PC-9 (cell line): ENCODE measurements at regions of chr1 and their contacts with region 1.

Region 1: DNA sequence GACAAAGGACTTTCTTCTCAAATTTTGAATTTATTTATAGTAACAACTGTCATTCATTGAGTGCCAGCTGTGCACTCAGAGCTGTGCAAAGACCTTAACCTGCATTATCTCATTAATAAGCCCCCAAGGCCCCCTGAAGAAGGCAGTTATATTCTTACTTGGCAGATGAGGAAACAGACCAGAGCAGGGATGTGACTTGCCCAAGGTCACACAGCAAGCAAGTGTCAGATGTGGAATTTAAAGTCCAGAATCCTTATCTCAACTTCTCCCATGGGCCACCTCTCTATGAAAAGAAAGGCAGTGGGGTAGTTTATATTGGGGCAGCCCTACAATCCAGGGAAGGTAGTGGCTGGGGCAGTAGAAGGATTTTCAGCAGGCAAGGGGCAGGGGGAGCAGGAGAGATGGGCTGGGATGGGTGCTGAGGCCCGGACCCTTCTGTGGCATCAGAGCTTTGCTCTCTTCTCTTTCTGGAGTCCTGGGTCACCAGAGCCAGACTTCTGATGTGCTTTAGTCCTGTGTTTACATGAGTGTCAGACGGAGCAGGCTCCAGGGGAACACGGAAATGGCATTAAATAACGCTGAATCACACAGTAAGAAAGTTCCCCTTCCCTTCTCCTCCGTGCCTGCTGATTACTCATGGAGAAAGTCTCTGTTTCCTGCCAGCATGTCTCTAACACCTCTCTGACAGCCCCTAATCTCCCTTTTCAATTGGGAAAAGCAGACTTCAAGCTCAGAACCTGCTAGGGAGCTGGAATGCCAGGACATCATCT is 39.5 kb downstream of the EPHB2 start:
- DNase-seq: peak; percentile 50 to 88
- H3K4me3 ChIP-seq: no peak overlapping the region
- H3K27ac ChIP-seq: peak overlapping the region; percentile 89
- H3K4me1 ChIP-seq: peaks cover 63% of the 10 kb centered on the region
- H3K27me3 ChIP-seq: no peaks in the 10 kb centered on the region
- CTCF ChIP-seq: no peak

Region 2: GRCh38 chr1:21012937-21013336 is 1737.2 kb before region 1 on chr1:
- CTCF ChIA-PET with region 1: no interaction called
- POLR2A ChIA-PET with region 1: no interaction called
- intact Hi-C with region 1: no loop called
- DNase-seq: no peak
- H3K4me3 ChIP-seq: no peak overlapping the region
- H3K27ac ChIP-seq: no peak overlapping the region
- H3K4me1 ChIP-seq: no peaks in the 10 kb centered on the region
- H3K27me3 ChIP-seq: no peaks in the 10 kb centered on the region
- CTCF ChIP-seq: no peak

Region 3: GRCh38 chr1:22709891-22710700 is 40.0 kb before region 1 on chr1:
- CTCF ChIA-PET with region 1: no interaction called
- POLR2A ChIA-PET with region 1: no interaction called
- intact Hi-C with region 1: loop called (anchors 5 kb)
- DNase-seq: peak in 1 of 2 experiments; percentile 64
- H3K4me3 ChIP-seq: peak overlapping the region; percentile 57; the same call in 1 of the 2 replicates
- H3K27ac ChIP-seq: no peak overlapping the region
- H3K4me1 ChIP-seq: 0 out of 2 replicates have a peak, but pooled peaks cover 5% of the 10 kb centered on the region
- H3K27me3 ChIP-seq: no peaks in the 10 kb centered on the region
- CTCF ChIP-seq: no peak

Region 4: DNA sequence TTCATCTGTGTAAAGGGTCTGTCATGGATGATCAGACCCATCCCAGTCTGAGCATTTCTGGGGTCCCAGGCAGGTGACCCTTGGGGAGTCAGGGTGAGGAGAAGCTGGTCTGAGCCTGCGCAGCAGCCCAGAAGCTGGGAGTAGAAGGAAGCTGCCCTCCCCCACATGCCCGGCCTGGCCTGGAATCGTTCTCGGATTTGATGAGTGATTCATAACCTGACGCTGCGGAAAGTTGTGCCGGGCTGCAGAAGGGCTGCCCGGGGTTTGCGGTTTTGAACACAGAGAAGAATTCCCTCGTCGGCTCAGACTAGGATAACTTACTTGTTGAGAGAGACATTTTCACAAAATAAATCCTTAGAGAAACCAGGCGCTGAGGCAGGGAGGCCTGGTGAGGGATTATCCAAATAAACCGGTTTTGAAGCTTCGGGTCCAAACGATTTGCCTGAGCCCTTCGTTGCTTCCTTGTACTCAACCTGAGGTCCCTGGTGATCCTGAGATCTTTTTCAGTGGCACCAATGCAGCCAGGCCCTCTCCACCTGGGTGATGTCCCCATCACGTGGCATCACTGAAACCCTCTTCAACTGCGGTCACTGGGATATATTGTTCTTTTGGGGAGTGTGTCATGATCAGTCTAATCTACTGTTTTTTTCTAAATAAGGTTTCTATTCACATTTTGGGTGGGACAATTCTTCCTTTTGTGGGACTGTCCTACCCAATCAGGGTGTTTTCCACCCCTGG is 10.3 kb before region 1 on chr1:
- CTCF ChIA-PET with region 1: no interaction called
- POLR2A ChIA-PET with region 1: interaction called, 10 read pairs
- intact Hi-C with region 1: no loop called
- DNase-seq: no peak
- H3K4me3 ChIP-seq: no peak overlapping the region
- H3K27ac ChIP-seq: no peak overlapping the region
- H3K4me1 ChIP-seq: no peaks in the 10 kb centered on the region
- H3K27me3 ChIP-seq: no peaks in the 10 kb centered on the region
- CTCF ChIP-seq: no peak

Region 5: DNA sequence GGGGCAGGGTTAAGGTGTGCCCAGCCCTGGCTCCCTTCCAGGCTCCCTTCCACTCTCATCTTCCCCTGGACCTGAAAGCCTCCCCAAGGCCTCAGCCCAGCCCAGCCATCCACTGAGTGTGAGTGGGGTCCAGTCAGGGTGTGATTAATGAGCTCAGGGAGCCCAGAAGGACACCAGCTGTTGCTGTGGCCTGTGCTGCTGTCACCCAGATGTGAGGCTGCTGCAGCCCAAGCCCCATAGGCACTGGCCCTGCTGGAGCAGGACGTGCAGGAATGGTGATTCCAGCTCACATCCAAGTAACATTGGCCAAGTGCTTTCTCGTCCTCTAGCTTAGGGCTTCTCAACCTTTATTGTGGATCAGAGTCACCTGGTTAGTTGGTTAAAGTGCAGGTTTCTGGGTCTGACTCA is 38.2 kb after region 1 on chr1:
- CTCF ChIA-PET with region 1: no interaction called
- POLR2A ChIA-PET with region 1: interaction called, 13 read pairs
- intact Hi-C with region 1: no loop called
- DNase-seq: peak in 1 of 2 experiments; percentile 31
- H3K4me3 ChIP-seq: no peak overlapping the region
- H3K27ac ChIP-seq: no peak overlapping the region
- H3K4me1 ChIP-seq: no peaks in the 10 kb centered on the region
- H3K27me3 ChIP-seq: no peaks in the 10 kb centered on the region
- CTCF ChIP-seq: no peak